Posterior vena cava (tissue), 2 donors: ENCODE measurements at regions of chr1 and their contacts with region 1.

Region 1: DNA sequence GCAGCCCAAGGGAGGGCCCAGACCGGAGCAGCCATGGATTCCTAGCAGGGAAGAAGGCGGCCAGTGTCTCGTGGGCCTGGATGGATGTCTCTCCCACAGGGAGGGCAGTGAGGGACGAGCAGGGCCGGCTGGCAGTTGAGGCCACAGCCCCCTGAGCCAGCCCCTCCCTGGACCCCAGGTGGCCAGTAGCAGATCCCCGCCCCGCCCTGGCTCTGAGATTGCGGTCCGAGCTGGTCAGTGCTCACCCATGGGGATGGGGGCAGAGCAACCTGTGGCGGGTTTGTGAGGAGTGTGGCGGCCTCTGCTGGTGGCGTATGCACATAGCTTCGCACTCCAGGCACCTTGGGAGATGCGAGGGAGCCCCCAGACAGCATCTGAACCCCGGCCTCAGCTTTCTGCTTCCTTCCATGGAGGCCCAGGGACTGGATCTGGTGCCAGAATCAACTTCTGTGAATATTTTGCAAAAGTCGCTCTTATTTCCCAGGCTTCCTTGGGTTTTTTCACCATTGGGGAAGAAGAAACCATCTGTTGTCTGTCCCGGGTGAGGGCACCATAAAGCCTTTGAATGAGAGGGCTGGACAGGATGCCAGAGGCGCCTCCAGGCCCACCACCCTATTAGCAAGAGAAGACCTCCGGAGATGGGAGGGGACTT is 8.4 kb upstream of the KCNN3 start:
- DNase-seq: peak; percentile 93

Region 2: DNA sequence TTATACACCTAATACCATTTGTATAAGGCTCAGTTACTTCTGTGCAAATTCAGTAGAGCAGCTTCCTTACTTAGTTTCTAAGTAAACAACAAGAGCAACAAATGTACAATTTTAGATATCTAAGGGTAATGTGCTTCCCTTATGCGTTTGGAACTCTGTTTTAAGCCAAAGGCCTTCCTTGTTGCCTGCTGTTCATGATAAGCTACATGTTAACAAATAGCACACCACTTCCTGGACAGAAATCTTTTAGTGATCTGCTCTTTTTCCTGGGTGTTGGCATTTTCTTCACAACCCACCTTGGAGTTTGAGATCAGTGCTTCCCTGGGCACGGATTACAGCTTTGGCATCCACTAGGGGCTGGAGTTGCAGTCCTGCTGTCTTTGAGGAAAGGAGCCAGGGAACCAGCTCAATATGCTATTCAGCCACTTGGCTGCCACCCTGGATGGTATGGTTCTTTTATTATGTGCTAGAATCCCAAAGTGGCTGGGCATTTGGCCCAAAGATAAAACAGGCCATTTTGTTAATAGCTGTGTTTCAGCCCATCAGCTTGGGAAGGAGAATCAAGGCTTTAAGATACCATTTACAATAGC is 214.9 kb before region 1 on chr1:
- intact Hi-C with region 1: loop called in 1 of 2 experiments (anchors 2 kb)
- DNase-seq: no peak

Region 3: GRCh38 chr1:154669464-154670282 is 208.8 kb before region 1 on chr1:
- intact Hi-C with region 1: loop called (anchors 1 to 2 kb)
- DNase-seq: peak; percentile 86